Right cardiac atrium (tissue), 5 donors: ENCODE measurements at regions of chr1 and their contacts with region 1.

Region 1: GRCh38 chr1:44220001-44220733 is 6.9 kb downstream of the DMAP1 start:
- DNase-seq: peak in 1 of 3 donors; percentile 58
- ATAC-seq: peak; percentile 3 to 5
- H3K4me3 ChIP-seq: no peak overlapping the region
- H3K27ac ChIP-seq: no peak overlapping the region
- H3K4me1 ChIP-seq: no peaks in the 10 kb centered on the region
- H3K27me3 ChIP-seq: no peaks in the 10 kb centered on the region

Region 2: GRCh38 chr1:43137445-43138052 is 1082.6 kb before region 1 on chr1:
- intact Hi-C with region 1: no loop called
- DNase-seq: no peak
- ATAC-seq: peak; percentile 80 to 91
- H3K4me3 ChIP-seq: no peak overlapping the region
- H3K27ac ChIP-seq: peak overlapping the region; percentile 51
- H3K4me1 ChIP-seq: no peaks in the 10 kb centered on the region
- H3K27me3 ChIP-seq: no peaks in the 10 kb centered on the region

Region 3: DNA sequence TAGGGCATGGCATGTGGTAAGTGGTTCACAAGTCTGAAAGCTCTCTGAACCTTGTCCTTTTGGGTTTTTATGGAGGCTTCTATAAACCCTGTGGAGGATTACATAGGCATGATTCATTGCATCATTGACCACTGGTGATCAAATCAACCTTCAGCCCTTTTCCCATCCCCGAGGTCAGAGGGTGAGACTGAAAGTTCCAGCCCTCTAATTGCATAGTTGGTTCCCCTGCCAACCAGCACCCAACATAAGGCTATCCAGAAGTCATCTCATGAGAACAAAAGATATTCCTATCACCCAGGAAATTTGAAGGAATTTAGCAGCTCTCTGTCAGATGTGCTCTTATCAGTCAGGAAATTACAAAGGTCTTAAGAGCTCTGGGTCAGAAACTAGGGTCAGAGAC is 376.1 kb before region 1 on chr1:
- intact Hi-C with region 1: no loop called
- DNase-seq: no peak
- ATAC-seq: no peak
- H3K4me3 ChIP-seq: no peak overlapping the region
- H3K27ac ChIP-seq: no peak overlapping the region
- H3K4me1 ChIP-seq: no peaks in the 10 kb centered on the region
- H3K27me3 ChIP-seq: no peaks in the 10 kb centered on the region

Region 4: GRCh38 chr1:44270686-44271628 is 50.8 kb after region 1 on chr1:
- intact Hi-C with region 1: no loop called
- DNase-seq: no peak
- ATAC-seq: no peak
- H3K4me3 ChIP-seq: no peak overlapping the region
- H3K27ac ChIP-seq: no peak overlapping the region
- H3K4me1 ChIP-seq: peaks cover 18% of the 10 kb centered on the region
- H3K27me3 ChIP-seq: no peaks in the 10 kb centered on the region

Region 5: DNA sequence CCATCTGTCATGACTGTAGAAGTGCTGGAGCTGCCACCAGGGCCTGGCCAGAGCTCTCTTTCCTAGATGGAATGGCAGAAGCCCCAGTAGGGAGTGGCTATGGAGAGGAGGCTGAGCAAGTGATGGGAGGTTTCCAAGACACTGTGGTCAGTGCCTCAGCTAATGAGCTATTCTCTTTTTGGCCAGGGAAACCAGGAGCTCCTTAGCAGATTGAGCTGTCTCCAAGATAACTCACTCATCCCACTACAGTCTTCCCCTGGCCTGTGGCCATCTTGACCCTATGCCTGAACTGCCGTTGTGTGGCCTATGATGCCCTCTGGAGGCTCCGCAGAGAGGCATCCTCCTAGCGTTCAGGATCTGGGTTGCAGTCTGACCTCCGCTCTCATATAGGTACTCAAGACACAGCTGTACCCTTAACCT is 74.4 kb after region 1 on chr1:
- intact Hi-C with region 1: loop called in 1 of 4 experiments (anchors 10 kb)
- DNase-seq: peak in 2 of 3 donors; percentile 36 to 78
- ATAC-seq: peak; percentile 52
- H3K4me3 ChIP-seq: no peak overlapping the region
- H3K27ac ChIP-seq: no peak overlapping the region
- H3K4me1 ChIP-seq: peaks cover 8% of the 10 kb centered on the region
- H3K27me3 ChIP-seq: no peaks in the 10 kb centered on the region